Caco-2 (cell line): ENCODE measurements at regions of chr16 and their contacts with region 1.

Region 1: GRCh38 chr16:7037495-7037894 is 295.1 kb upstream of the RBFOX1 start:
- DNase-seq: peak; percentile 46 to 48
- H3K4me3 ChIP-seq: no peak overlapping the region
- H3K4me3 Mint-ChIP-seq: no peak overlapping the region
- H3K27ac Mint-ChIP-seq: no peak overlapping the region
- H3K4me1 ChIP-seq: peaks cover 19% of the 10 kb centered on the region
- H3K4me1 Mint-ChIP-seq: peaks cover 6% of the 10 kb centered on the region
- H3K27me3 ChIP-seq: no peaks in the 10 kb centered on the region
- H3K27me3 Mint-ChIP-seq: no peaks in the 10 kb centered on the region
- CTCF ChIP-seq: no peak

Region 2: GRCh38 chr16:7057468-7057867 is 20.0 kb after region 1 on chr16:
- CTCF ChIA-PET with region 1: interaction called, 4 read pairs
- POLR2A ChIA-PET with region 1: no interaction called
- intact Hi-C with region 1: loop called (anchors 1 kb)
- DNase-seq: peak; percentile 57 to 63
- H3K4me3 ChIP-seq: no peak overlapping the region
- H3K4me3 Mint-ChIP-seq: peak overlapping the region; percentile 59
- H3K27ac Mint-ChIP-seq: peak overlapping the region; percentile 72
- H3K4me1 ChIP-seq: peaks cover 45% of the 10 kb centered on the region
- H3K4me1 Mint-ChIP-seq: peaks cover 21% of the 10 kb centered on the region
- H3K27me3 ChIP-seq: no peaks in the 10 kb centered on the region
- H3K27me3 Mint-ChIP-seq: no peaks in the 10 kb centered on the region
- CTCF ChIP-seq: no peak

Region 3: DNA sequence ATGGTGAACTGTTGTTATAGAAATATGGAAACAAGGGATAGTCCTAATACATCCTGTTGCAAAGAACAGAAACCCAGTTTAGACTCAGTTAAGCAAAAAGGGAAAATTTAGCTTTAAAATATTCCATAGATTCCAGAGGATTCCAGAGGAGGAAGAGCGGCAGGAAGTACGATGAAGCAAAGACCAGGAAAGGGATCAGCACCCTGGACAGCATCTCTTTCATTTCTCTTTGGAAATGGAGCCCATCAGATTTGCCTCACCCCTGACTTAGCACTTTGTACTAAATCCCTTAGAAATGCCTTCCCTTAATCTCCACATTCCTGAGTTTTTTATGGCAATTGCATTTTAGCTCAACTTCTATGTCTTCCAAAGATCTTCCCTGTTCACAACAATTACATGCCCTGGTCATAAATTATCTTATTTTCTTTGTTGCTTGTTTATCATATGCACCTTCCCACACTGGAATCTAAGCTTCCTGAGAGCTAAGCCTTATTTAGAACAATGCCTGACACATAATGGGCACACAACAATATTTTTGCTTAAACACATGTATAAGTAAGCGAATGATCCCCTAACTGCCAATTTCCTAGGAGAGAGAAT is 145.1 kb after region 1 on chr16:
- CTCF ChIA-PET with region 1: no interaction called
- POLR2A ChIA-PET with region 1: no interaction called
- intact Hi-C with region 1: loop called (anchors 10 kb)
- DNase-seq: peak in 1 of 2 experiments; percentile 45
- H3K4me3 ChIP-seq: no peak overlapping the region
- H3K4me3 Mint-ChIP-seq: no peak overlapping the region
- H3K27ac Mint-ChIP-seq: no peak overlapping the region
- H3K4me1 ChIP-seq: 0 out of 2 replicates have a peak, but pooled peaks cover 6% of the 10 kb centered on the region
- H3K4me1 Mint-ChIP-seq: peaks cover 6% of the 10 kb centered on the region
- H3K27me3 ChIP-seq: no peaks in the 10 kb centered on the region
- H3K27me3 Mint-ChIP-seq: no peaks in the 10 kb centered on the region
- CTCF ChIP-seq: no peak